HepG2 (cell line): ENCODE measurements at regions of chr16 and their contacts with region 1.

Region 1: DNA sequence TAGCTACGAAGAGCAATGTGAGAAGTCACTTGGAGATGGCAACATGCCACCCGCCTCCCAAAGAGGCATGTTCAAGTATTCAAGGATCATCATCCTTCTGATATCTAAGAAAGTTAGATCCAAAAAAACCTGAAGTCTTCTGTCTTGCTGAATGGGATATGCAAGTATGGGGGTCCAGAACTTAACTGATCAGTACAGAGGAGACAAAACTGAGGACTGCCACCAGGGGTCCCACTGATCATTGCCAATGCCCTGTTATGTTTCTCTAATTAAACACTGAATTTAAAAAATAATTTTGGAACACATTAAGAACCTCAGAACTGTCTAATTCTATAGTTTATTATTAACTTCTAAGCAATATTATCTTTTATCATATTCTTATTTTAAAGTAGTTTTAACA is 99.7 kb downstream of the CDH8 start:
- DNase-seq: no peak
- ATAC-seq: peak; percentile 68
- H3K4me3 ChIP-seq: no peak overlapping the region
- H3K27ac ChIP-seq: no peak overlapping the region
- H3K4me1 ChIP-seq: no peaks in the 10 kb centered on the region
- H3K27me3 ChIP-seq: no peaks in the 10 kb centered on the region
- CTCF ChIP-seq: no peak
- EP300 ChIP-seq: no peak
- POLR2A ChIP-seq: no peak
- RAD21 ChIP-seq: no peak

Region 2: DNA sequence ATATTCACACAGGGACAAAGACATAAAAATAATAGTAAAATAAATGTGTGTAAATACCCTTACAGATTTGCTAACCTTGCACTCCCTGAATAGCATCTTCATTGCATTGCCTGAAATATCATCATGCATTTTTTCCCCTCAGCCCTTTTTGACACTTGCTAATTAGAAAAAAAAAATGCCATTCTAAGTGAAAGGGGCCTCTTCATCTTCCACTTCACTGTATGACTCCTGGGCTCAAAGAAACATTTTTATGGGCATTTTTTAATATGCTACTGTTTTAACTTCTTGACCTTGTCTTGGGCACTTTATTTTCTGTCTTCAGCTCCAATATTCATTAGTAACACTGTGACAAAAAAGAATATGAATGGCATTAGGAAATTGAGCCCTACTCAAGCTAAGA is 1324.7 kb before region 1 on chr16:
- CTCF ChIA-PET with region 1: no interaction called
- POLR2A ChIA-PET with region 1: no interaction called
- in situ Hi-C with region 1: no loop called
- intact Hi-C with region 1: no loop called
- DNase-seq: no peak
- ATAC-seq: no peak
- H3K4me3 ChIP-seq: no peak overlapping the region
- H3K27ac ChIP-seq: no peak overlapping the region
- H3K4me1 ChIP-seq: no peaks in the 10 kb centered on the region
- H3K27me3 ChIP-seq: no peaks in the 10 kb centered on the region
- CTCF ChIP-seq: no peak
- EP300 ChIP-seq: no peak
- POLR2A ChIP-seq: no peak
- RAD21 ChIP-seq: no peak

Region 3: DNA sequence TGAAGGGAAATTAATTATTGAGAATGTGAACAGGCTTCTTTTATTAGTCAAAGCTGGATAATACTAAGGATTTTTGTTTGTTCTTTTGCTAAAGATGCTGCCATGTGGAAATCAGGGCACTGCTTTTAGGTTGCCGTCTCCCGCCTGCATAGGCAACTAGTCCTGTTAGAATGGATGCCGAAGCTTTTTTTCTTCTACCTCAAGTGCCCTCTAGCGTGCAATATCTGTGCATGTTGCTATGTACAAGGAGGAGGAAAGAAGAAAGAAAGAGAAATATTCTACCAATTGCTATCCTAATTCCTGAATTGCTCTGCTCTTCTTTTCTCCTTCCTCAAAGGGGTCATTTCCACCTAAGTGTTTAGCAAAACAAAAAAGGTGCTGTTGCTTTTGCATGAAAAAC is 104.9 kb after region 1 on chr16:
- CTCF ChIA-PET with region 1: no interaction called
- POLR2A ChIA-PET with region 1: no interaction called
- in situ Hi-C with region 1: no loop called
- intact Hi-C with region 1: loop called (anchors 5 kb)
- DNase-seq: peak; percentile 40
- ATAC-seq: peak; percentile 86
- H3K4me3 ChIP-seq: no peak overlapping the region
- H3K27ac ChIP-seq: no peak overlapping the region
- H3K4me1 ChIP-seq: no peaks in the 10 kb centered on the region
- H3K27me3 ChIP-seq: 0 out of 5 replicates have a peak, but pooled peaks cover 0 to 13% of the 10 kb centered on the region in 2 experiments
- CTCF ChIP-seq: peak; percentile 55
- EP300 ChIP-seq: no peak
- POLR2A ChIP-seq: no peak
- RAD21 ChIP-seq: no peak

Region 4: GRCh38 chr16:62130101-62130500 is 193.6 kb after region 1 on chr16:
- CTCF ChIA-PET with region 1: interaction called, 3 read pairs
- POLR2A ChIA-PET with region 1: no interaction called
- in situ Hi-C with region 1: no loop called
- intact Hi-C with region 1: loop called (anchors 1 kb)
- DNase-seq: no peak
- ATAC-seq: no peak
- H3K4me3 ChIP-seq: no peak overlapping the region
- H3K27ac ChIP-seq: no peak overlapping the region
- H3K4me1 ChIP-seq: no peaks in the 10 kb centered on the region
- H3K27me3 ChIP-seq: no peaks in the 10 kb centered on the region
- CTCF ChIP-seq: no peak
- EP300 ChIP-seq: no peak
- POLR2A ChIP-seq: no peak
- RAD21 ChIP-seq: no peak